MCF 10A (cell line): ENCODE measurements at regions of chr3 and their contacts with region 1.

Region 1: GRCh38 chr3:27484015-27484844 is at the start of gene SLC4A7:
- DNase-seq: peak; percentile 94
- H3K4me3 Mint-ChIP-seq: peak within 1 kb of the TSS; percentile 100
- H3K27ac Mint-ChIP-seq: peak within 1 kb of the TSS; percentile 97
- H3K4me1 Mint-ChIP-seq: peaks cover 10% of the 10 kb centered on the region
- H3K27me3 Mint-ChIP-seq: no peaks in the 10 kb centered on the region
- CTCF ChIP-seq: no peak
- total RNA-seq, gene SLC4A7: 37.2 and 41.9 TPM in 2 replicates

Region 2: GRCh38 chr3:27392950-27393679 is 91.1 kb before region 1 on chr3:
- CTCF ChIA-PET with region 1: no interaction called
- POLR2A ChIA-PET with region 1: no interaction called
- intact Hi-C with region 1: no loop called
- DNase-seq: no peak
- H3K4me3 Mint-ChIP-seq: no peak overlapping the region
- H3K27ac Mint-ChIP-seq: no peak overlapping the region
- H3K4me1 Mint-ChIP-seq: peaks cover 9% of the 10 kb centered on the region
- H3K27me3 Mint-ChIP-seq: no peaks in the 10 kb centered on the region
- CTCF ChIP-seq: no peak

Region 3: DNA sequence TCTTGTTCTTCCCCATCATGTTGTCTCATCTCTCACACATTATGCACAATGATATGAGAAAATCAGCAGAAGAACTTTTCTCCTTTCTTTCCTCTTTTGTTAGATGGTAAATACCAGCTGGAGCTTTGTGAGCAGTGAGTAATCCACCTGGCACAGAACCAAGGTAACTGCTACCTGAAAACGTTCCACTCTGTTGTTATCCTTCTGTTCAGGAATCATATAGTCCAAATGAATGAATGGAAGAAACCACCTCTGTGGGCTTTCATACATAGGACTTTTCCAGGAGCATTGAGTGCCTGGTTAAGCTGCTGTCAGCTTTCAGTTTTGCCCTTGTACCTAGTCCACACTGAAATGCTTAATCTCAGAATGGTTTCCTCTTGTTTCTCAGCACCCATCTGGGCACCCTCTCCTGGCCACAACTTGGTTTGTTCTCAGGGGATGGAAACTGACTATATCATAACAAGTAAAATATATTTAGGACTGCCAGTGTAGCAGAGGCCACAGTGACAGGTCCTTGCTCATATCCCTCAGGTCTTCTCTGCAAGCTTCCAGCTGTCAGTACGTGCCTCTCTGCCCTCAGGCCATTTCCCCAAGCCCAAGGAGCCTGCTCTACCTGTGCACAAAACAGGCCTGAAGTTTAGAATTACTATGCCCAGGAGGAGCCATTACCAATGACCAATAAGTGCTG is 23.4 kb after region 1 on chr3:
- CTCF ChIA-PET with region 1: interaction called, 6 read pairs
- POLR2A ChIA-PET with region 1: interaction called, 15 read pairs
- intact Hi-C with region 1: no loop called
- DNase-seq: peak; percentile 74
- H3K4me3 Mint-ChIP-seq: no peak overlapping the region
- H3K27ac Mint-ChIP-seq: no peak overlapping the region
- H3K4me1 Mint-ChIP-seq: peaks cover 13% of the 10 kb centered on the region
- H3K27me3 Mint-ChIP-seq: no peaks in the 10 kb centered on the region
- CTCF ChIP-seq: no peak

Region 4: GRCh38 chr3:27521179-27521871 is 37.1 kb after region 1 on chr3:
- CTCF ChIA-PET with region 1: interaction called, 3 read pairs
- POLR2A ChIA-PET with region 1: interaction called, 42 read pairs
- intact Hi-C with region 1: no loop called
- DNase-seq: peak; percentile 96
- H3K4me3 Mint-ChIP-seq: no peak overlapping the region
- H3K27ac Mint-ChIP-seq: peak overlapping the region; percentile 29
- H3K4me1 Mint-ChIP-seq: peaks cover 27% of the 10 kb centered on the region
- H3K27me3 Mint-ChIP-seq: no peaks in the 10 kb centered on the region
- CTCF ChIP-seq: no peak

Region 5: GRCh38 chr3:27544372-27544865 is 60.2 kb after region 1 on chr3:
- CTCF ChIA-PET with region 1: no interaction called
- POLR2A ChIA-PET with region 1: interaction called, 13 read pairs
- intact Hi-C with region 1: no loop called
- DNase-seq: peak; percentile 76
- H3K4me3 Mint-ChIP-seq: no peak overlapping the region
- H3K27ac Mint-ChIP-seq: peak overlapping the region; percentile 75
- H3K4me1 Mint-ChIP-seq: peaks cover 14% of the 10 kb centered on the region
- H3K27me3 Mint-ChIP-seq: no peaks in the 10 kb centered on the region
- CTCF ChIP-seq: no peak

Region 6: GRCh38 chr3:27659279-27660021 is 175.2 kb after region 1 on chr3:
- CTCF ChIA-PET with region 1: interaction called, 3 read pairs
- POLR2A ChIA-PET with region 1: interaction called, 4 read pairs
- intact Hi-C with region 1: loop called (anchors 1 kb)
- DNase-seq: peak; percentile 66
- H3K4me3 Mint-ChIP-seq: no peak overlapping the region
- H3K27ac Mint-ChIP-seq: no peak overlapping the region
- H3K4me1 Mint-ChIP-seq: peaks cover 5% of the 10 kb centered on the region
- H3K27me3 Mint-ChIP-seq: no peaks in the 10 kb centered on the region
- CTCF ChIP-seq: peak; percentile 82

Region 7: GRCh38 chr3:27681245-27681748 is 197.1 kb after region 1 on chr3:
- CTCF ChIA-PET with region 1: interaction called, 20 read pairs
- POLR2A ChIA-PET with region 1: interaction called, 72 read pairs
- intact Hi-C with region 1: loop called (anchors 1 kb)
- DNase-seq: peak; percentile 86
- H3K4me3 Mint-ChIP-seq: peak overlapping the region; percentile 74
- H3K27ac Mint-ChIP-seq: no peak overlapping the region
- H3K4me1 Mint-ChIP-seq: peaks cover 23% of the 10 kb centered on the region
- H3K27me3 Mint-ChIP-seq: no peaks in the 10 kb centered on the region
- CTCF ChIP-seq: peak; percentile 66